Activated T-helper 1 cell treated with anti-CD3 and anti-CD28 coated beads, Interleukin-12 subunit alpha, Interleukin-12 subunit beta, Interleukin-2, Interleukin-4 antibody, amounts not matched to agents 30 ng/mL and 10 ng/mL and 1 ng/mL, durations not matched to agents 14 hours and 24 hours and 36 hours (primary cell): ENCODE measurements at regions of chr11 and their contacts with region 1.

Region 1: GRCh38 chr11:95699631-95700470 is 89.7 kb downstream of the FAM76B start:
- DNase-seq: no peak
- H3K4me3 Mint-ChIP-seq: peak overlapping the region; percentile 73
- H3K27ac Mint-ChIP-seq: peak overlapping the region; percentile 95
- H3K4me1 Mint-ChIP-seq: peaks cover 68% of the 10 kb centered on the region
- H3K27me3 Mint-ChIP-seq: no peaks in the 10 kb centered on the region

Region 2: GRCh38 chr11:95089620-95090542 is 610.0 kb before region 1 on chr11 and contains the start of gene ENDOD1:
- intact Hi-C with region 1: loop called (anchors 5 kb)
- DNase-seq: peak; percentile 85
- H3K4me3 Mint-ChIP-seq: peak within 1 kb of the TSS; percentile 89
- H3K27ac Mint-ChIP-seq: peak within 1 kb of the TSS; percentile 96
- H3K4me1 Mint-ChIP-seq: peaks cover 83% of the 10 kb centered on the region
- H3K27me3 Mint-ChIP-seq: no peaks in the 10 kb centered on the region
- total RNA-seq, gene ENDOD1: 33.8 and 34.3 TPM in 2 replicates

Region 3: GRCh38 chr11:95584589-95584988 is 115.3 kb before region 1 on chr11:
- intact Hi-C with region 1: loop called (anchors 1 kb)
- DNase-seq: no peak
- H3K4me3 Mint-ChIP-seq: no peak overlapping the region
- H3K27ac Mint-ChIP-seq: peak overlapping the region; percentile 10
- H3K4me1 Mint-ChIP-seq: peaks cover 34% of the 10 kb centered on the region
- H3K27me3 Mint-ChIP-seq: no peaks in the 10 kb centered on the region

Region 4: DNA sequence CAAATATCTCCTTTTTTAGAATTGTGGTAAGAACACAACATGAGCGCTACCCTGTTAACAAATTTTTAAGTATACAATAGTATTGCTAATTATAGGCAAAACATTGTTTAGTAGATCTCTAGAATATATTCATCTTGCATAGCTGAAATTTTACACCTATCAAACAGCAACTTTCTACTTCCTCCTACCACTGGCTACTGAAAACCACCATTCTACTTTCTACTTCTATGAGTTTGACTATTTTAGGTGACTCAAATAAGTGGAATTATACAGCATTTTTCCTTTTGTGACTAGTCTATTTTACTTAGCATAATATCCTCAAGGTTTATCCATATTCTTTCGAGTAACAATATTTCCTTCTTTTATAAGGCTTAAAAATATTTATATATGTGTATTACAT is 38.7 kb before region 1 on chr11:
- intact Hi-C with region 1: loop called (anchors 1 kb)
- DNase-seq: no peak
- H3K4me3 Mint-ChIP-seq: no peak overlapping the region
- H3K27ac Mint-ChIP-seq: no peak overlapping the region
- H3K4me1 Mint-ChIP-seq: peaks cover 27% of the 10 kb centered on the region
- H3K27me3 Mint-ChIP-seq: no peaks in the 10 kb centered on the region

Region 5: GRCh38 chr11:95680169-95680929 is 19.5 kb before region 1 on chr11:
- intact Hi-C with region 1: loop called (anchors 1 kb)
- DNase-seq: no peak
- H3K4me3 Mint-ChIP-seq: no peak overlapping the region
- H3K27ac Mint-ChIP-seq: peak overlapping the region; percentile 56
- H3K4me1 Mint-ChIP-seq: peaks cover 90% of the 10 kb centered on the region
- H3K27me3 Mint-ChIP-seq: no peaks in the 10 kb centered on the region

Region 6: DNA sequence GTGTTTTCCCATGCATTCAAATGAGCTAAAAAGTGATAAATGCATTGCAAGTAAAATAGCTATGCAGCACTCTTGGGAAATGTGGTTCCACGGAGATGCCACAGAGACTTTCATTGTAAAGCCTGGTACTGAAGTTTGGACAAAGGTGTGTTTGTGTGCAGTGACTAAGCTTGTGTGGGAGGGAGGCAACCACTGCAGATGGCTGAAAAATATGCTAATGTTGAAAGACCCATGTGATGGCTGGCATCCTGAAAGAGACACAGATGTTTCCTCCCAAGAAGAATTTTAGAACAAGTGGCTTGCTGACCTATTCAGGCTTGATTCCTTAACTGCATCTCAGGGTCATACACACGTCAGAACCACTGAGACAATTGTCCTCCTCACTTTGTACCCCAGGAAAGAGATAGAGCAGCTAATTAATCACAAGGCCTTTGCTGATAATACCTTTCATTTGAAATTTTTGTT is 16.0 kb after region 1 on chr11:
- intact Hi-C with region 1: loop called (anchors 1 kb)
- DNase-seq: no peak
- H3K4me3 Mint-ChIP-seq: peak overlapping the region; percentile 54
- H3K27ac Mint-ChIP-seq: peak overlapping the region; percentile 82
- H3K4me1 Mint-ChIP-seq: peaks cover 63% of the 10 kb centered on the region
- H3K27me3 Mint-ChIP-seq: no peaks in the 10 kb centered on the region

Region 7: DNA sequence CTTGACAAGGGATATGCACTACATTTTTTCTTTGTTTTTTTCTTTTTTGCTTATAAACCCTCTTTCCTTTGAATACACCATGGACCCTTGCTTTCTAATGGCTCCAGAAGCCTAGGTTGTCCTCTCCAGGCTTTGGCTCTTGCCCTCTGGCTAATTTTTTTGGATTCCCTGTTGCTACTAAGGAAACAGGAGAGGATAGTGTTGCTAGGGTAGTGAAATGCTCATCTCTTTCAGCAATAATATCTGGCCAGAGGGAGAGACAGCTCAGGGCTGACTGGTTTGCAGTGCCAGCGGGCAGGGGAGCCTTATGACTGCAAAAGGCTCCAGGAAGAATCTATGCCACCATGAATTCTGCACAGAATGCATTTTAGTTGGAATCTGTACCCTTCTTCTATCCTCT is 906.1 kb after region 1 on chr11:
- intact Hi-C with region 1: no loop called
- DNase-seq: no peak
- H3K4me3 Mint-ChIP-seq: no peak overlapping the region
- H3K27ac Mint-ChIP-seq: no peak overlapping the region
- H3K4me1 Mint-ChIP-seq: no peaks in the 10 kb centered on the region
- H3K27me3 Mint-ChIP-seq: no peaks in the 10 kb centered on the region